B cell (primary cell): ENCODE measurements at regions of chr13 and their contacts with region 1.

Region 1: GRCh38 chr13:110455941-110456340 is 105.6 kb downstream of the RAB20 start:
- DNase-seq: peak; percentile 82
- ATAC-seq: peak; percentile 93
- H3K4me3 ChIP-seq: peak overlapping the region in 3 of 5 experiments; percentile 20 to 37 (median 29)
- H3K4me3 Mint-ChIP-seq: peak overlapping the region; percentile 60
- H3K27ac ChIP-seq: no peak overlapping the region
- H3K27ac Mint-ChIP-seq: peak overlapping the region; percentile 8
- H3K4me1 ChIP-seq: peaks cover 9 to 10% of the 10 kb centered on the region in 2 donors
- H3K4me1 Mint-ChIP-seq: peaks cover 19% of the 10 kb centered on the region
- H3K27me3 ChIP-seq: no peaks in the 10 kb centered on the region
- H3K27me3 Mint-ChIP-seq: peaks cover 4% of the 10 kb centered on the region
- CTCF ChIP-seq: peak; percentile 84

Region 2: DNA sequence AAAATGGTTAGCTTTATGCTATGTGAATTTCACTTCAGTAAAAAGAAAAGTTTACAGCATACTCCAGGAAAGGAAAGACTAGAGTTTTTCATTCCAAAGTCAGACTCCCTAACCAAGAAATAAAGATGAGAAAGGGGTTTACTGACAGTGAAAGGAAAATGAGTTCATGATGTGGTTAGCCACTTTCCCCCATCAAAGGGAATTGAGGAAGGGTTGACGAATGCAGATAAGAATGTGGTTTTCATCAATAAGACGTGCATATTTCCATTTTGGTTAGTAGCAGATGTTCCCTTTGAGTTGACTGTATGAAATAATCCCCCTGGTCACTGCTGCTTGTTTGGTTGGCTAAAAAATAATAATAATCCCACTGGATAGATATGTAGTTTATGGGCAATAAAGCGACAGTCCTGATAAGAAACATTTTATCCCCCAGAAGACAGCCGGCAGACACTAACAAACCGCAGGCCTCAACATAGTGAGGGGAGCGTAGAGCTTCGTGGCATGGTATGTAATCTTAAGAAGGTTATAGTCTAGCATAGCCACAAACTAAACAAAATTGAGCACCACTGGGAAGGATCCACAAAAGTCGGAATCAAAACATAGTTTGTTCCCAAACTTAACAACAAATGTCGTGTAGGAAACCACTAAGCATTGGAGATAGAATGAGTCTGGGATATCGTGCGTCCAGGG is 34.1 kb before region 1 on chr13:
- CTCF ChIA-PET with region 1: no interaction called
- POLR2A ChIA-PET with region 1: no interaction called
- intact Hi-C with region 1: no loop called
- DNase-seq: no peak
- ATAC-seq: no peak
- H3K4me3 ChIP-seq: no peak overlapping the region
- H3K4me3 Mint-ChIP-seq: no peak overlapping the region
- H3K27ac ChIP-seq: no peak overlapping the region
- H3K27ac Mint-ChIP-seq: no peak overlapping the region
- H3K4me1 ChIP-seq: no peaks in the 10 kb centered on the region
- H3K4me1 Mint-ChIP-seq: no peaks in the 10 kb centered on the region
- H3K27me3 ChIP-seq: peaks cover 0 to 33% (median 27%) of the 10 kb centered on the region in 4 experiments
- H3K27me3 Mint-ChIP-seq: peaks cover 66% of the 10 kb centered on the region
- CTCF ChIP-seq: no peak

Region 3: DNA sequence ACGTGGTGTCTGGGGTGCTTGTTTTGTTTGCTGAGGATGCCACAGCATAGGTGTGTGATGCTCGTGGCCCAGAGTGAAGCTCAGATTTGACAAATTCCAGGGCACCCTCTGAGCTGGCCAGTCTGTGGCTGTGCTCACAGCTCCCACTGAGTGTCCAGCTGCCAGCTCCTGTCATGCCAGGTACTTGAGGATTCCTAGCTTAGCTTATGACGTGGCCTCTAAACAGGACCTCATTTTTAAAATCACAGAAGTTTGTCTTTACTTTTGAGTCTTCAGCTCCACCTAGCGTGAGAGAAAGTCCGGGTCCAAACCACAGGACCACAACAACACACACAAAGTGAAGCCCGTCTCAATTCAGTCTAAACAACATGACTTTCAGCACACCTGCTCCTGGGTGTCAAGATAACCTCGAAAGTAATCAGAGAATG is 11.7 kb before region 1 on chr13:
- CTCF ChIA-PET with region 1: interaction called, 10 read pairs
- POLR2A ChIA-PET with region 1: no interaction called
- intact Hi-C with region 1: no loop called
- DNase-seq: no peak
- ATAC-seq: no peak
- H3K4me3 ChIP-seq: no peak overlapping the region
- H3K4me3 Mint-ChIP-seq: no peak overlapping the region
- H3K27ac ChIP-seq: no peak overlapping the region
- H3K27ac Mint-ChIP-seq: no peak overlapping the region
- H3K4me1 ChIP-seq: no peaks in the 10 kb centered on the region
- H3K4me1 Mint-ChIP-seq: peaks cover 13% of the 10 kb centered on the region
- H3K27me3 ChIP-seq: peaks cover 0 to 27% (median 2%) of the 10 kb centered on the region in 4 experiments
- H3K27me3 Mint-ChIP-seq: peaks cover 48% of the 10 kb centered on the region
- CTCF ChIP-seq: no peak

Region 4: GRCh38 chr13:110509971-110510786 is 54.2 kb after region 1 on chr13:
- CTCF ChIA-PET with region 1: interaction called, 10 read pairs
- POLR2A ChIA-PET with region 1: no interaction called
- intact Hi-C with region 1: no loop called
- DNase-seq: peak; percentile 11
- ATAC-seq: no peak
- H3K4me3 ChIP-seq: no peak overlapping the region
- H3K4me3 Mint-ChIP-seq: no peak overlapping the region
- H3K27ac ChIP-seq: no peak overlapping the region
- H3K27ac Mint-ChIP-seq: no peak overlapping the region
- H3K4me1 ChIP-seq: no peaks in the 10 kb centered on the region
- H3K4me1 Mint-ChIP-seq: peaks cover 4% of the 10 kb centered on the region
- H3K27me3 ChIP-seq: no peaks in the 10 kb centered on the region
- H3K27me3 Mint-ChIP-seq: peaks cover 4% of the 10 kb centered on the region
- CTCF ChIP-seq: no peak

Region 5: DNA sequence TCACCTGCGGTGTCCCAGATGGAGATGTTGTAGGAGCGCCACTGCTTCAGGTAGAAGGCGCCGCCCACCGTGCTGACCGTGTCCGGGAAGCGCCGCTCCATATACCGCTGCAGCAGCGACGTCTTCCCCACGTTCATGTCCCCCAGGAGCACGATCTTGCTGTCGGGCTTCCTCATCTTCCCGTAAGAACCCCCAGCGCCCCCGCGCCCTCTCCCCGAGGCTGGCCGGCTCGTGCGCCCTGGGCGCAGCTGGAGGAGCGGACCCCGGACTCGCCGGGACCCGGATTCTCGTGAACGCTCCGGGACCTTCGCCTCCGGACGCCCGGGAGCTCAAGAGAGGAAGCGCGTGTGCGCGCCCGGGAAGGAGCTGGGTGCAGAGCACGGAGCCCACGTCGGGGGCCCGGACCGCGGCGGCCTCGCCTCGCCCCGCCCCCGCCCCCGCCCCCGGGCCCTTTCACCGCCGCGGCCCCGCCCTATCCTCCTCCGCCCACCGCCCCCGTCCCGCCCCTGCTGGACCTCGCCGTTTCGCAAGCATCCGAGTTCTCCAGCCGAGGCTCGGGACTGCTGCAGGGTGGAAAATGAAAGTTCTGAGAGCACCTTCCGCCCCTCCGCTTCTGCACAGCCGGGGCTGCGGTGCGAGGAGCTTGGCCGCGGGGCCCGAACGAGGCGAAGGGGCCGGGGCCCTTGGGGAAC is 105.5 kb after region 1 on chr13 and contains the start of gene RAB20:
- CTCF ChIA-PET with region 1: interaction called, 12 read pairs
- POLR2A ChIA-PET with region 1: no interaction called
- intact Hi-C with region 1: loop called (anchors 1 kb)
- DNase-seq: peak; percentile 74
- ATAC-seq: peak; percentile 81
- H3K4me3 ChIP-seq: peak within 1 kb of the TSS; percentile 59 to 92 (median 70)
- H3K4me3 Mint-ChIP-seq: peak within 1 kb of the TSS; percentile 91
- H3K27ac ChIP-seq: peak within 1 kb of the TSS; percentile 12 to 51
- H3K27ac Mint-ChIP-seq: peak within 1 kb of the TSS; percentile 79
- H3K4me1 ChIP-seq: peaks cover 13 to 15% of the 10 kb centered on the region in 2 donors
- H3K4me1 Mint-ChIP-seq: peaks cover 34% of the 10 kb centered on the region
- H3K27me3 ChIP-seq: peaks cover 0 to 5% (median 0%) of the 10 kb centered on the region in 4 experiments
- H3K27me3 Mint-ChIP-seq: peaks cover 10% of the 10 kb centered on the region
- CTCF ChIP-seq: no peak
- total RNA-seq, gene RAB20: 4.6 and 5.1 TPM in 2 replicates

Region 6: DNA sequence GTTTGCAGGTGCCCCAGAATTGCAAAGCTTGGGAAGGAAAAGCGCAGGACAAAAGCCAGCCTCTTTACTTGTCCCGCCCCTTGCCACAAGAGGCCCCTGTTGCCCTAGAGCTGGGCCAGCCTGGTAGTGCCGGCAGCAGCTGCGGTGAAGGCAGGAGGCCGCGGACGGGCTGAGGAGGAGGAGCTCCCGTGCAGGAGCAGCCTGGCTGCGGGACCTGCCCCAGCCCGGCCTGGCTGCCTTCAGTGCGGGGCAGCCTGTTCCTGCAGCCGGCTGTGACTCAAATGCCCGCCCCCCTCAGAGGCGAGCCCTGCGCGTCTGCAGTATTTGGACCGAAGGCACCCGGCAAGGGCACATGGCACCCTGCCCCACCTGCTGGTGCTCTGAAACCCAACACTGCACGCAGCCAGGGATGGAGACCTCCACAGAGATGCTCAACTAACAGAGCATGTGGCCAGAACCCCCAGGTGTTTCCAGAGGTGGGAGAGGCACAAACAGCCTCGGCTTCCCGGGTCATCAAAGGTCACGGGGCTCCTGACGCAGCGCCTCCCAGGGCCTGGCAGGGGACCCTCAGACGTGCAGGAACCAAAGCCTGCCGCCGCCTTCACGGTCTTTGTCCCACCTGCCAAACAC is 189.1 kb after region 1 on chr13:
- CTCF ChIA-PET with region 1: interaction called, 19 read pairs
- POLR2A ChIA-PET with region 1: no interaction called
- intact Hi-C with region 1: no loop called
- DNase-seq: peak; percentile 85
- ATAC-seq: peak; percentile 95
- H3K4me3 ChIP-seq: peak overlapping the region in 2 of 5 experiments; percentile 23 to 39
- H3K4me3 Mint-ChIP-seq: peak overlapping the region; percentile 57
- H3K27ac ChIP-seq: no peak overlapping the region
- H3K27ac Mint-ChIP-seq: peak overlapping the region; percentile 71
- H3K4me1 ChIP-seq: peaks cover 19 to 23% of the 10 kb centered on the region in 2 donors
- H3K4me1 Mint-ChIP-seq: peaks cover 24% of the 10 kb centered on the region
- H3K27me3 ChIP-seq: no peaks in the 10 kb centered on the region
- H3K27me3 Mint-ChIP-seq: no peaks in the 10 kb centered on the region
- CTCF ChIP-seq: peak; percentile 71

Region 7: GRCh38 chr13:110819203-110820014 is 363.5 kb after region 1 on chr13:
- CTCF ChIA-PET with region 1: interaction called, 16 read pairs
- POLR2A ChIA-PET with region 1: no interaction called
- intact Hi-C with region 1: loop called (anchors 1 kb)
- DNase-seq: peak; percentile 82
- ATAC-seq: peak; percentile 84
- H3K4me3 ChIP-seq: no peak overlapping the region
- H3K4me3 Mint-ChIP-seq: no peak overlapping the region
- H3K27ac ChIP-seq: no peak overlapping the region
- H3K27ac Mint-ChIP-seq: no peak overlapping the region
- H3K4me1 ChIP-seq: peaks cover 0 to 7% of the 10 kb centered on the region in 2 donors
- H3K4me1 Mint-ChIP-seq: peaks cover 3% of the 10 kb centered on the region
- H3K27me3 ChIP-seq: peaks cover 0 to 3% (median 0%) of the 10 kb centered on the region in 4 experiments
- H3K27me3 Mint-ChIP-seq: peaks cover 8% of the 10 kb centered on the region
- CTCF ChIP-seq: peak; percentile 99